ENCODE measurements at regions of chr10 and their contacts with region 1.

Region 1: DNA sequence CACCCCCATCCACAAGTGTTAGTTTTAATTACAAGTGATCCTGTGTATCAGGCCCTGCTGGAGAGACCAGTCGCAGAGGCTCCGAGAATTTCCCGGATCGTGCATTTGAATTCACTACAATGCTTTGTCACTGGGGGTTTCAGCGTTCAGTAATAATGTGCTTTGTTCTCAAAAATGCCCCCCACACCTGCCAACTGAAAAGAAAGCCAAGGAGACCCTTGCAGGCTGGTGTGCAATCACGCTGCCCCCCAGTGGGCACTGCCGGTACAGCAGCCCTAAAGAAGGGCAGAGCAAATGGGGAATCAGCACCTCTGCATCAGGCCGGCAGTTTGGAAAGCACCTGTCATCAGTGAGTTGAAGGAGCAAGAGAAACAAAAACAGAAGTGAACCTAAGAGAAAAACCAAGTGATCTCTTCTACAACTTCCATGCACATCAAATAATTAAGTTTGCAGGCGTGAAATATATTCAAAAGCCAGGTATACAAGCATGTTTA is 177.6 kb downstream of the PARD3 start:
- DNase-seq: peak; percentile 61 to 66
- ATAC-seq: peak; percentile 28 to 71 (median 63)
- H3K4me3 ChIP-seq: no peak overlapping the region
- H3K27ac ChIP-seq: no peak overlapping the region
- H3K4me1 ChIP-seq: peaks cover 3 to 25% (median 17%) of the 10 kb centered on the region in 9 donors
- H3K27me3 ChIP-seq: no peaks in the 10 kb centered on the region
- CTCF ChIP-seq: peak in 8 of 9 donors; percentile 82 to 97 (median 96)

Region 2: DNA sequence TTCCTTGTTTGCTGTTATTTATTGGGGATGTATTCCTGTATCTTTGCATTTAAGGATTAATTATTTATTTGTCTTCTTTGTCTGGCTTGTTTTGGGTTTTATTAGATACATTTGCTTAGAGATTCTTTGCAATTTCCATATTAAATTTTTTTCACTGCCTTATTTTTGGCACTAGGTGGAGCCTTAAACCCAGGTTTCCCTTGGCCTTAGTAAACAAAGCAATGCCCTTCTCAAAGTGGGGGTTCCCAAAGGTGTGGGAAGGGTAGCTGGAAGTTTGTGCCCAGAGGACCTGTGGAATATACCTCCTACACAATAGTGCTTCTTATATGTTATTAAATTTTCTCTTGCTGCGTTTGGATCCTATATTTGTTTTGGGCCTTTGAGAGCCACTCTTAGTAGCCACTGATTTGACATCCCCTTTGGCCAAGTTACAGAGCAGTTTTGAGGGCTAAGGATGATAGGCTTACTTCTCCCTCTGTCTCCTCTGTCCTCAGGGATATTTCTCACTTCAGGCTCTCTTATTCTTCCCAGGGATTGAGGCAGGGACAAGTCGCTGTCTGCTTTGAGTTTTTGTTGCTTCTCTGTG is 1841.8 kb before region 1 on chr10:
- intact Hi-C with region 1: loop called in 1 of 10 experiments (anchors 10 kb)
- DNase-seq: peak in 1 of 2 donors; percentile 13
- ATAC-seq: peak in 2 of 8 donors; percentile 58 to 67
- H3K4me3 ChIP-seq: no peak overlapping the region
- H3K27ac ChIP-seq: no peak overlapping the region
- H3K4me1 ChIP-seq: no peaks in the 10 kb centered on the region
- H3K27me3 ChIP-seq: no peaks in the 10 kb centered on the region
- CTCF ChIP-seq: peak; percentile 51 to 87 (median 74)

Region 3: GRCh38 chr10:33115738-33116719 is 1521.4 kb before region 1 on chr10:
- intact Hi-C with region 1: loop called in 3 of 10 experiments (anchors 5 to 10 kb)
- DNase-seq: peak in 1 of 2 donors; percentile 54
- ATAC-seq: peak in 5 of 8 donors; percentile 47 to 64 (median 54)
- H3K4me3 ChIP-seq: no peak overlapping the region
- H3K27ac ChIP-seq: peak overlapping the region in 5 of 10 donors; percentile 8 to 76 (median 21)
- H3K4me1 ChIP-seq: peaks cover 0 to 66% (median 35%) of the 10 kb centered on the region in 9 donors
- H3K27me3 ChIP-seq: no peaks in the 10 kb centered on the region
- CTCF ChIP-seq: peak; percentile 38 to 69 (median 60)

Region 4: DNA sequence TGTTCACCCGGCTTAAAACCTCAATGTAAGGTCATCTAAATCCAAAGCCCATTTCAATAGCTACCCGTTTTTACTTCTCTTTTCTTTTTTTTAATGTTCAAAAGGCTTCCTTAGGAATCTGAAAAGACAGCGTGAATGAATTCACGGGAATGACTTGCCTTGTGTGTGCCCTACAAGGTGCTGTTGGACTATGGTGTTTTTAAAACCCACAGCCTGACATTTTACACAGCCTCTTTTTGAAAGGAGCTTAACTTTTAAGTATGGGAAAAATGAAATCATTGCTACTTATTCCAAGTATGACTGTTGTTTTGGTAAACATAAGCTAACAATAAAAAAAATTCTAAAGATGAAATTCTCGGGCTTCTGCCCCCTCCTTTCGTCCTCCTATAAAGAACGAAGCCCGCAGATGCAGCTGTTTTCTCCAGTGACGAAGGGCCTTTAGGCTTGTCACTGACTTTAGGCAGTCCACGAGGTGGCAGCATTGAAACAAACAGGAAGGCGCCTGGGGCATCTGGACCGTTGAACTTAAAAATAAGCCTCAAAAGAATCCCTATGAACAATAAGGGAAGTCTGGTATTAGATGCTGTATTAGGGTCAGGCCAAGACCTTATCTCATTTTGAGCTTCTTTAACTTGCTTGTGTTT is 1444.3 kb before region 1 on chr10:
- intact Hi-C with region 1: loop called in 8 of 10 experiments (anchors 5 to 10 kb)
- DNase-seq: peak; percentile 70 to 90
- ATAC-seq: peak; percentile 74 to 85 (median 82)
- H3K4me3 ChIP-seq: no peak overlapping the region
- H3K27ac ChIP-seq: peak overlapping the region in 8 of 10 donors; percentile 29 to 83 (median 62)
- H3K4me1 ChIP-seq: peaks cover 13 to 63% (median 54%) of the 10 kb centered on the region in 9 donors
- H3K27me3 ChIP-seq: no peaks in the 10 kb centered on the region
- CTCF ChIP-seq: peak; percentile 52 to 92 (median 82)

Region 5: DNA sequence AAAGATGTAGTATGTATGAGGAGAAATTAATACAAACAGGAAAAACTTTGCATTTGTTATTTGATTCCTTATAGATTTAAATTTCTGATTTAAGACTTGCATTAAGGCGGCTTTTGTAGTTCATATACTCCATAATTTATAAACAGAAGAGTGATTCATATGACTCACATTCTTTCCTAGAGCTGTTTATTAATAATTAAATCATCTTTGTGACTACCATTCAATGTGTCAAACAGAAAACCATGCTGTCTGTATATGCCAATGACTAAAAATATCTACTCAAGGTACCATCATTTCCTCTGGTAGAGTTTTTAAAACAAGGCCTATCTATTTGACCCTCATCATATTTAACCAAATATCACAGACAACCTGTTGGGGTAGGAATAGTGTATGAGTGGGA is 324.1 kb before region 1 on chr10:
- intact Hi-C with region 1: no loop called
- DNase-seq: no peak
- ATAC-seq: no peak
- H3K4me3 ChIP-seq: no peak overlapping the region
- H3K27ac ChIP-seq: peak overlapping the region in 1 of 10 donors; percentile 3
- H3K4me1 ChIP-seq: peaks cover 0 to 11% (median 0%) of the 10 kb centered on the region in 9 donors
- H3K27me3 ChIP-seq: no peaks in the 10 kb centered on the region
- CTCF ChIP-seq: no peak

Region 6: DNA sequence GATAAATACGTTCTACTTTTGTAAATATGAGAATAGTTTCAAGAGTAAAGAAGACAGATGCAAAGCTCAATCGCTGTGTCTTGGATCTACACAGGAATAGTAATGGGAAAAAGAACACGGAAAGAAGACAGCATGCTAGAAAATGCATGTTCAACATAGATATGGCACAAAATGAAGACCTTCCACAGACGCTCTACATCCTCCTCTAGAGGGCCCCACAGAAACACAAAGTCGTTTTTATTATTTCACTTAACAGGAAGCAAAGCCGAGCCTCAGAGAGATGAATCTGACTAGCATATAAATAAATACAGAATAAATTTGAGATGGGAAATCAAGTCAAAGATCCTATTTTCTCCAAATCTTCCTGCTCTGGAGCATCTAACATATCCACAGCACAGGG is 114.9 kb before region 1 on chr10:
- intact Hi-C with region 1: loop called in 9 of 10 experiments (anchors 2 to 10 kb)
- DNase-seq: no peak
- ATAC-seq: peak in 2 of 8 donors; percentile 34 to 63
- H3K4me3 ChIP-seq: peak overlapping the region in 2 of 10 donors; percentile 8 to 15
- H3K27ac ChIP-seq: no peak overlapping the region
- H3K4me1 ChIP-seq: peaks cover 0 to 21% (median 12%) of the 10 kb centered on the region in 9 donors
- H3K27me3 ChIP-seq: no peaks in the 10 kb centered on the region
- CTCF ChIP-seq: peak in 8 of 9 donors; percentile 24 to 62 (median 45)

Region 7: DNA sequence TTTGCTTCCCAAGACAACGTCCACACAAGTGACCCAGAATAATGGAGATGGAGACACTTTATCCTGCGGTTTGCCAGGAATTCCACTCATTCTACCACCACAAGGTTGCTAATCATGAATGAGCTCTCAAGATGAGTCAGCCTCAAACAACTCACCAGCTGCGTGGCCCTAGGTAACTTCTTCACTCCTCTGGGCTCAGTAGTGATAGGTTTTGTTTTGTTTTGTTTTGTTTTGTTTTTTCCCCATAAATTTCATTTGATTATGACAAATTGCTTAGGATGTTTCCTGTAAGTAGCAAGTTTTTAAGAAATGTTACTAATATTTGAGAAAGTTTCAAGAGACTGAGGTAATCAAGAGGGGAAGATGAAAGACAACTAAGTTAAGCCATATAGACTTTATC is 109.1 kb before region 1 on chr10:
- intact Hi-C with region 1: loop called in 9 of 10 experiments (anchors 2 to 10 kb)
- DNase-seq: no peak
- ATAC-seq: no peak
- H3K4me3 ChIP-seq: no peak overlapping the region
- H3K27ac ChIP-seq: no peak overlapping the region
- H3K4me1 ChIP-seq: peaks cover 0 to 29% (median 25%) of the 10 kb centered on the region in 9 donors
- H3K27me3 ChIP-seq: no peaks in the 10 kb centered on the region
- CTCF ChIP-seq: no peak

Region 8: GRCh38 chr10:34789966-34790506 is 152.6 kb after region 1 on chr10:
- intact Hi-C with region 1: no loop called
- DNase-seq: no peak
- ATAC-seq: peak in 5 of 8 donors; percentile 28 to 46 (median 33)
- H3K4me3 ChIP-seq: no peak overlapping the region
- H3K27ac ChIP-seq: no peak overlapping the region
- H3K4me1 ChIP-seq: peaks cover 7 to 46% (median 25%) of the 10 kb centered on the region in 9 donors
- H3K27me3 ChIP-seq: peaks cover 0 to 8% (median 0%) of the 10 kb centered on the region in 7 donors
- CTCF ChIP-seq: no peak

Measured in heart right ventricle (tissue), 16 donors.